ENCODE measurements at regions of chr21 and their contacts with region 1.

Region 1: GRCh38 chr21:37522641-37523295 is 156.2 kb downstream of the DYRK1A start:
- DNase-seq: no peak
- H3K4me3 ChIP-seq: no peak overlapping the region
- H3K4me3 Mint-ChIP-seq: no peak overlapping the region
- H3K27ac Mint-ChIP-seq: no peak overlapping the region
- H3K4me1 ChIP-seq: no peaks in the 10 kb centered on the region
- H3K4me1 Mint-ChIP-seq: no peaks in the 10 kb centered on the region
- H3K27me3 ChIP-seq: no peaks in the 10 kb centered on the region
- H3K27me3 Mint-ChIP-seq: no peaks in the 10 kb centered on the region
- CTCF ChIP-seq: no peak

Region 2: GRCh38 chr21:37484535-37485474 is 38.0 kb before region 1 on chr21:
- CTCF ChIA-PET with region 1: no interaction called
- POLR2A ChIA-PET with region 1: no interaction called
- intact Hi-C with region 1: no loop called
- DNase-seq: no peak
- H3K4me3 ChIP-seq: no peak overlapping the region
- H3K4me3 Mint-ChIP-seq: no peak overlapping the region
- H3K27ac Mint-ChIP-seq: no peak overlapping the region
- H3K4me1 ChIP-seq: no peaks in the 10 kb centered on the region
- H3K4me1 Mint-ChIP-seq: no peaks in the 10 kb centered on the region
- H3K27me3 ChIP-seq: no peaks in the 10 kb centered on the region
- H3K27me3 Mint-ChIP-seq: no peaks in the 10 kb centered on the region
- CTCF ChIP-seq: no peak

Region 3: GRCh38 chr21:37582590-37582989 is 59.8 kb after region 1 on chr21:
- CTCF ChIA-PET with region 1: no interaction called
- POLR2A ChIA-PET with region 1: no interaction called
- intact Hi-C with region 1: loop called (anchors 2 kb)
- DNase-seq: peak; percentile 61
- H3K4me3 ChIP-seq: no peak overlapping the region
- H3K4me3 Mint-ChIP-seq: no peak overlapping the region
- H3K27ac Mint-ChIP-seq: no peak overlapping the region
- H3K4me1 ChIP-seq: peaks cover 2% of the 10 kb centered on the region
- H3K4me1 Mint-ChIP-seq: peaks cover 9% of the 10 kb centered on the region
- H3K27me3 ChIP-seq: no peaks in the 10 kb centered on the region
- H3K27me3 Mint-ChIP-seq: no peaks in the 10 kb centered on the region
- CTCF ChIP-seq: peak; percentile 70 to 77

Measured in Caco-2 (cell line).